ENCODE measurements at regions of chr9 and their contacts with region 1.

Region 1: GRCh38 chr9:132669698-132670456 is at the start of gene DDX31:
- DNase-seq: peak; percentile 88 to 90
- H3K4me3 ChIP-seq: peak within 1 kb of the TSS; percentile 58 to 98 (median 97)
- H3K27ac ChIP-seq: peak within 1 kb of the TSS; percentile 94 to 97 (median 95)
- H3K4me1 ChIP-seq: peaks cover 33 to 41% of the 10 kb centered on the region in 2 donors
- H3K27me3 ChIP-seq: no peaks in the 10 kb centered on the region
- CTCF ChIP-seq: peak in 1 of 6 experiments; percentile 5
- POLR2A ChIP-seq: peak in 1 of 2 donors; percentile 57
- total RNA-seq, gene DDX31: 33.4 to 44.1 (median 36.0) TPM

Region 2: DNA sequence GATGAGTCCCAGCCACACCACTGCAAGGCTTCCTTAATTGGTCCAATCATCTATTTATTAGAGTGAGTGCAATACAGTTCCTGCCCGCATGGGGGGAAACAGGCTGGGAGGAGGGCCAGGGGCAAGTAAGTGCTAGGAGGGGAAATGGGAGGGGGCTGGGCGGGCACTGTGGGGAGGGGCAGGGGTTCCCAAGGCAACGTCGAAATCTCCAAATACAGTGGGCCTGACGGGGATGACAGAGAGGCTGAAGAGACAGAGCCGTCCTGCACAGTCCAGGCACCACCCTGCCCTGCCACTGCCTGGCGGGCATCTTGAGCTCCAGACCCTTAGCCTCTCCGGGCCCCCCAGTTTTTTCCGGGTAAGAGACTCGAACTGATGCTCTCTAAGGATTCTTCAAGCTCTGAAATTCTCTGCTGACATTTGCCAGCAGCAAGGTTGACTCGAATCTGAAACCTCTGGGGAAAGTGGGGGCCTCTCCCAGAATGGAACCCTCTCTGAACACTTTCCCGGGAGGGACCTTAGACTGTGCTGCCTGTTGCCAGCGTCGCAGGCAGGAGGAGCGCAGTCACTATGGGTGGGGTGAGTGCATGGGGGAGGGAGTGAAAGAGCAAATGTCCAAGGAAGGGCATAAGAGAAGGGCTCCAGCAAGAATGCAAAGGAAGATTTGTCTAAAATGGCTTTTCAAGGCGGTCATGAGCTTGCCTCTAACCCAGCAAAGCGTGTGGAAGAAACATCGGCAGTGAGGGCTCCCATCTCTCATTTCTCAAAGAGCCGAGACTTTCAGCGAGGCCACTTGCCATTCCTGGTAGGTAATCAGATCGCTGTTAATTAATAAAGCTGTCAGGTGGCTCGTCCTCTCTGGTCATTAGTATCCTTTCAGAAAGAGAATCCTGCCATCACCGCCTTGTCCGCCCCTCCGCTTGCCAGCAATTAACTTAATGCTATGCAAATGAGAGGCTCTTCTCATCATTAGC is 99.3 kb after region 1 on chr9:
- intact Hi-C with region 1: loop called (anchors 10 kb)
- DNase-seq: peak; percentile 52 to 58
- H3K4me3 ChIP-seq: peak overlapping the region; percentile 11 to 54 (median 46)
- H3K27ac ChIP-seq: peak overlapping the region; percentile 64 to 71 (median 70)
- H3K4me1 ChIP-seq: peaks cover 6 to 7% of the 10 kb centered on the region in 2 donors
- H3K27me3 ChIP-seq: no peaks in the 10 kb centered on the region
- CTCF ChIP-seq: peak in 5 of 6 experiments; percentile 36 to 57 (median 38)
- POLR2A ChIP-seq: peak in 1 of 2 donors; percentile 30

Region 3: GRCh38 chr9:132877824-132878694 is 208.2 kb after region 1 on chr9 and contains the start of gene AK8:
- intact Hi-C with region 1: loop called (anchors 5 kb)
- DNase-seq: peak; percentile 75 to 81
- H3K4me3 ChIP-seq: peak within 1 kb of the TSS; percentile 94 to 100 (median 98)
- H3K27ac ChIP-seq: peak within 1 kb of the TSS; percentile 89 to 99 (median 94)
- H3K4me1 ChIP-seq: peaks cover 7 to 24% of the 10 kb centered on the region in 2 donors
- H3K27me3 ChIP-seq: no peaks in the 10 kb centered on the region
- CTCF ChIP-seq: peak in 1 of 6 experiments; percentile 12
- POLR2A ChIP-seq: peak in 1 of 2 donors; percentile 89
- total RNA-seq, gene AK8: 5.4 to 9.9 (median 8.0) TPM